T-cell (primary cell): ENCODE measurements at regions of chr11 and their contacts with region 1.

Region 1: DNA sequence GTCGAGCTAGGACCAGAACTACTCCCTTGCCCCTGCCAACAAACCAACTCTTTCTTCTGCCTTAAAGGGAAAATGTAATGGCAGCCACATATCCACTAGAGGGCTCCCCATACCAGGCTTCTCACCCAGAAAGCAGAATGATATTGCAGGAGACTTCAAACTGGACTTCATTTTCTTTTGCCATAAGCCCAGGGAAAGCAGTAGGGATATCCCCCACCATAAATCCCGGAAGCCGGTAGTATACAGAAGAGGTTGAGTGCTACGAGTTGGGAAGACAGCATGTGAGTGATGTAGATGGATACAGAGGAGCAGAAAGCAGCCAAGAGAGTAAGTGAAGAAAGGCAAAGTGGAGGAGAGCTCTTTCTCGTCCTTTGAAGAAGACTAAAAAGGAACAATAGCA is 12.1 kb downstream of the PLAAT5 start:
- DNase-seq: peak in 34 of 35 experiments; percentile 8 to 77 (median 42)
- ATAC-seq: peak; percentile 52 to 61 (median 58)
- H3K4me3 ChIP-seq: no peak overlapping the region
- H3K4me3 Mint-ChIP-seq: no peak overlapping the region
- H3K27ac ChIP-seq: no peak overlapping the region
- H3K27ac Mint-ChIP-seq: no peak overlapping the region
- H3K4me1 ChIP-seq: no peaks in the 10 kb centered on the region
- H3K4me1 Mint-ChIP-seq: no peaks in the 10 kb centered on the region
- H3K27me3 ChIP-seq: peaks cover 0 to 3% of the 10 kb centered on the region in 2 experiments
- H3K27me3 Mint-ChIP-seq: peaks cover 0 to 2% of the 10 kb centered on the region in 2 donors

Region 2: GRCh38 chr11:63395697-63396096 is 83.2 kb before region 1 on chr11:
- CTCF ChIA-PET with region 1: no interaction called
- POLR2A ChIA-PET with region 1: interaction called in 1 of 2 experiments, 10 read pairs
- DNase-seq: no peak
- ATAC-seq: no peak
- H3K4me3 ChIP-seq: no peak overlapping the region
- H3K4me3 Mint-ChIP-seq: no peak overlapping the region
- H3K27ac ChIP-seq: no peak overlapping the region
- H3K27ac Mint-ChIP-seq: no peak overlapping the region
- H3K4me1 ChIP-seq: no peaks in the 10 kb centered on the region
- H3K4me1 Mint-ChIP-seq: no peaks in the 10 kb centered on the region
- H3K27me3 ChIP-seq: peaks cover 2 to 24% of the 10 kb centered on the region in 2 experiments
- H3K27me3 Mint-ChIP-seq: peaks cover 43 to 83% of the 10 kb centered on the region in 2 donors

Region 3: GRCh38 chr11:63459586-63459985 is 19.3 kb before region 1 on chr11:
- CTCF ChIA-PET with region 1: no interaction called
- POLR2A ChIA-PET with region 1: no interaction called
- DNase-seq: no peak
- ATAC-seq: no peak
- H3K4me3 ChIP-seq: no peak overlapping the region
- H3K4me3 Mint-ChIP-seq: no peak overlapping the region
- H3K27ac ChIP-seq: no peak overlapping the region
- H3K27ac Mint-ChIP-seq: no peak overlapping the region
- H3K4me1 ChIP-seq: no peaks in the 10 kb centered on the region
- H3K4me1 Mint-ChIP-seq: no peaks in the 10 kb centered on the region
- H3K27me3 ChIP-seq: peaks cover 0 to 7% of the 10 kb centered on the region in 2 experiments
- H3K27me3 Mint-ChIP-seq: peaks cover 6% of the 10 kb centered on the region in 2 donors

Region 4: DNA sequence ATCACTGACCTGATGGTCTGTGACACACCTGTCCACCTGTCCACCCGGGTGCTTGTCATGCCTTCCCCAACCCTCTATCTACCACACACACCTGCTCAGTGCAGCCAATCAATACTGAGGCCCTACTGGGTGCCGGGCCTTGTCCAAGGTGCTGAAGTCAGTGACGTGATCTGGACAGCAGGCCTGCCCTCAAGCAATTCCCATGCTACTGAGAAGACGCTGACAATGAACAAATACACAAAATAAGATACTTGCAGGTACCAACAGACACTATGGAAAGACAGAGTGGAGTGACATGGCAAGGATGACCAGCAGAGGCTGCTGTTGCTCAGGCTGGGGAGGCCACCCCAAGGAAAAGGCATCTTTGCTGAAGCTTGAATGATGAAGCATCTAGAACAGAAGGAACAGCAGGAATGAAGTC is 114.1 kb after region 1 on chr11:
- CTCF ChIA-PET with region 1: no interaction called
- POLR2A ChIA-PET with region 1: no interaction called
- DNase-seq: no peak
- ATAC-seq: no peak
- H3K4me3 ChIP-seq: no peak overlapping the region
- H3K4me3 Mint-ChIP-seq: no peak overlapping the region
- H3K27ac ChIP-seq: no peak overlapping the region
- H3K27ac Mint-ChIP-seq: no peak overlapping the region
- H3K4me1 ChIP-seq: no peaks in the 10 kb centered on the region
- H3K4me1 Mint-ChIP-seq: peaks cover 0 to 8% (median 0%) of the 10 kb centered on the region in 3 donors
- H3K27me3 ChIP-seq: no peaks in the 10 kb centered on the region
- H3K27me3 Mint-ChIP-seq: no peaks in the 10 kb centered on the region

Region 5: GRCh38 chr11:63635762-63636465 is 157.0 kb after region 1 on chr11:
- CTCF ChIA-PET with region 1: interaction called, 6 to 108 read pairs
- POLR2A ChIA-PET with region 1: interaction called in 1 of 2 experiments, 3 read pairs
- DNase-seq: peak; percentile 31 to 84 (median 66)
- ATAC-seq: peak; percentile 66 to 79 (median 74)
- H3K4me3 ChIP-seq: no peak overlapping the region
- H3K4me3 Mint-ChIP-seq: no peak overlapping the region
- H3K27ac ChIP-seq: no peak overlapping the region
- H3K27ac Mint-ChIP-seq: peak overlapping the region in 1 of 2 donors; percentile 8
- H3K4me1 ChIP-seq: peaks cover 0 to 2% of the 10 kb centered on the region in 2 experiments
- H3K4me1 Mint-ChIP-seq: peaks cover 5 to 15% (median 12%) of the 10 kb centered on the region in 3 donors
- H3K27me3 ChIP-seq: no peaks in the 10 kb centered on the region
- H3K27me3 Mint-ChIP-seq: no peaks in the 10 kb centered on the region